HAP-1 (cell line): ENCODE measurements at regions of chr1 and their contacts with region 1.

Region 1: DNA sequence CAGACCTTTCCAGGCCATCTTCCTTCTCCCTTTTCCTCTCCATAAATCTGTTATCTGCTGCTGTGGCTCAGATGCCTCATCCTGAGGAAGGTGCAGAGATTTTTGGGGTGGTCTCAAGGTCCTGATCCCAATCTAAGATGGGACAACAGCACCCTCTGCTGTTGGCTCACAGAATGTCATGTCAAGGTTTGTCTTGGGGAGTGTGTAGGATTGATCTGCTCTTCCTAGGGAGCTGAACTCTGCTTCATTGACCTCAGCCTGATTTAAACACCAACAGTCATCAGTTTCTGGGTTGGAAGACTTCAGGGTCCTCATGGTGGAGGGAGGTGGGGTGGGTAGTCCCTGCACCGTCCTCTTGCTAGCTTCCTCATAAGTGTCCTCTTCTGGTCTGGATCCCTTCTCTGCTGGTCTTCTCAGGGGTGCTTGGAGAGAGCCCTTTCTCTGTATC is 62.8 kb upstream of the LAX1 start:
- DNase-seq: peak; percentile 51 to 76
- H3K4me3 ChIP-seq: no peak overlapping the region
- H3K4me1 ChIP-seq: no peaks in the 10 kb centered on the region
- H3K27me3 ChIP-seq: no peaks in the 10 kb centered on the region

Region 2: GRCh38 chr1:203273206-203273868 is 428.8 kb before region 1 on chr1:
- in situ Hi-C with region 1: loop called (anchors 5 kb)
- DNase-seq: peak; percentile 83 to 94
- H3K4me3 ChIP-seq: no peak overlapping the region
- H3K4me1 ChIP-seq: peaks cover 21% of the 10 kb centered on the region
- H3K27me3 ChIP-seq: no peaks in the 10 kb centered on the region

Region 3: DNA sequence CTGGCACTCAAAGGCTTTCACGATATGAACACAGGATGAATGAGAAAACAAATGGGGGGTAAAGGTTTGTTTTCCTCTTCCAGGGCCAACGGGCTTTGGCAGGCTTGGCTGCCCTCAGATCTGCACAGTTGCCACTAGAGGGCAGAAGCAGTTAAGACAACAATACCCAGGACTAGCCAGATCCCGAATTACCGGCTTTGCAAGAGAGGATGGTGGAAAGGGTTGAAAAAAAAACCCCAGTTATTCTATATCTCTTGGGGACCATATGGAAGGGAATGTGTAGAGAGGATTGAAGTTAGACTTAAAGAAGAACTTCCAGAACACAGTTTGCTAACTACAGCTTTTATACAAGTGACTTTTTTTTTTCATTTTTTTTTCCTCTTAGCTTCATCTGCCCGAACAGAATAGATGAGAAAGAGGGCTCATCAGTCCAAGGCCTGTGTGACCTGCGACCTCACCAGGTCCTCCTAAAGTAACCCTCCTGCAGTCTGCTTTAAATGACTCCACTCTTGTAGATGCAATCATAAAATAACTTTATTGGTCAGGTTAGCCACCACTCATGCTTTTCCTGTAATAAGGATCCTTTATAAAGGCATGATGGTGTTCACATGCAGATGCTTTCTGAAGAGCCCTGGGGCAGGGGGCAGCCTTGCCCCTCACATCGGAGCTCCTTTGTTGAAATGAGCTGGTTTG is 361.9 kb before region 1 on chr1:
- in situ Hi-C with region 1: loop called (anchors 5 kb)
- DNase-seq: peak; percentile 77 to 79
- H3K4me3 ChIP-seq: no peak overlapping the region
- H3K4me1 ChIP-seq: peaks cover 9% of the 10 kb centered on the region
- H3K27me3 ChIP-seq: peaks cover 8% of the 10 kb centered on the region

Region 4: DNA sequence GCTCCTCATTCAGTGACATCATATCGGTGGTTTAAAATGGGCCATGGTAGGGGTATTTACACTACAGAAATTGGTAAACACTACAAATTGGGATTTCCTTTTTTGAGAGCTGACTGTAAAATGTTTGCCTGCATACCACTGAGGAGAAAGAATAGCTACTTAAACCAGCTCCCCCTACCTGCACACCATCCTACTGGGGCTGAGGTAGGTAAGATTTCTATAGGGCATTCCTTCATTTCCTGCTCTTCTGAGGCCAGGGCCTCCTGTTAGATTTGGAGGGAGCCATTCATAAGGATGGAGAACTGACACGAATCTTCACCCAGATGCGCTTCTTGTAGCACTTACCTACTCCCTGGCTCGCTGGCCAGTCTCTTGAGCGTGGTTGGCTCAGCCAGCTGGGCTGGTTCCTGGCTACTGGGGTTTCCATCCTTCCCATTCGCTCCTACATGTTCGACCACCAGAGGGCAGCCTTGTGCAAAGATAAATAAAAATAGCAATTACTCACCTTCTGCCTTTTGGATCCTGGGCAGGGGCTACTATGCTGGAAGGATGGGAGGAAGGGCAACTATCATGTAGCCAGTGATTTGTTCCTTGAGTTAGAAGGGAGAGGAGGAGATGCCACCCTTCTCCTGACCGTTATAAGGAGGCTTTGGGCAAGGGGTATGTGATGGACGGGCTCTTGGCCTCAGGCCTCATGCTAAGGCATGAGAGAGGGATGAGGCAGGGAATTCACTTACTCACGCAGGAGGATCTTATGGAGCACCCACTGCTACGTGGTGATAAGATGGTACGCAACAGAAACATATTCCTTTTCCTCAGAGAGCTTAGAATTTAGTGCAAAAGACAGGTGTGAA is 197.5 kb before region 1 on chr1:
- in situ Hi-C with region 1: loop called (anchors 5 kb)
- DNase-seq: peak; percentile 64 to 89
- H3K4me3 ChIP-seq: no peak overlapping the region
- H3K4me1 ChIP-seq: no peaks in the 10 kb centered on the region; the same call in 1 of the 2 replicates
- H3K27me3 ChIP-seq: no peaks in the 10 kb centered on the region

Region 5: GRCh38 chr1:203649551-203649998 is 52.6 kb before region 1 on chr1:
- in situ Hi-C with region 1: no loop called
- DNase-seq: no peak
- H3K4me3 ChIP-seq: no peak overlapping the region
- H3K4me1 ChIP-seq: no peaks in the 10 kb centered on the region
- H3K27me3 ChIP-seq: no peaks in the 10 kb centered on the region